Heart left ventricle (tissue), 16 donors: ENCODE measurements at regions of chr2 and their contacts with region 1.

Region 1: GRCh38 chr2:112048887-112049286 is 6.2 kb upstream of the TMEM87B start:
- DNase-seq: no peak
- ATAC-seq: peak; percentile 39 to 78 (median 71)
- H3K4me3 ChIP-seq: no peak overlapping the region
- H3K27ac ChIP-seq: peak overlapping the region in 1 of 12 donors; percentile 27
- H3K4me1 ChIP-seq: peaks cover 0 to 31% (median 14%) of the 10 kb centered on the region in 12 donors
- H3K27me3 ChIP-seq: no peaks in the 10 kb centered on the region
- CTCF ChIP-seq: peak; percentile 78 to 98 (median 84)
- POLR2A ChIP-seq: no peak

Region 2: GRCh38 chr2:111887819-111888223 is 161.1 kb before region 1 on chr2:
- intact Hi-C with region 1: loop called in 7 of 10 experiments (anchors 1 to 2 kb)
- DNase-seq: peak; percentile 66 to 83 (median 73)
- ATAC-seq: peak in 3 of 4 donors; percentile 31 to 62 (median 60)
- H3K4me3 ChIP-seq: no peak overlapping the region
- H3K27ac ChIP-seq: no peak overlapping the region
- H3K4me1 ChIP-seq: peaks cover 0 to 18% (median 8%) of the 10 kb centered on the region in 12 donors
- H3K27me3 ChIP-seq: no peaks in the 10 kb centered on the region
- CTCF ChIP-seq: peak; percentile 54 to 85 (median 72)
- POLR2A ChIP-seq: no peak